ENCODE measurements at regions of chr1 and their contacts with region 1.

Region 1: GRCh38 chr1:178126790-178127189 is 32.9 kb downstream of the RASAL2 start:
- DNase-seq: peak; percentile 96
- ATAC-seq: peak; percentile 96
- H3K4me3 ChIP-seq: no peak overlapping the region
- H3K27ac ChIP-seq: peak overlapping the region; percentile 79
- H3K4me1 ChIP-seq: peaks cover 32% of the 10 kb centered on the region
- H3K27me3 ChIP-seq: no peaks in the 10 kb centered on the region
- CTCF ChIP-seq: no peak

Region 2: GRCh38 chr1:178055779-178056471 is 70.9 kb before region 1 on chr1:
- CTCF ChIA-PET with region 1: no interaction called
- POLR2A ChIA-PET with region 1: interaction called, 12 read pairs
- in situ Hi-C with region 1: no loop called
- intact Hi-C with region 1: no loop called
- DNase-seq: peak; percentile 54
- ATAC-seq: peak; percentile 96
- H3K4me3 ChIP-seq: peak overlapping the region; percentile 21 to 27
- H3K27ac ChIP-seq: peak overlapping the region; percentile 89
- H3K4me1 ChIP-seq: peaks cover 33% of the 10 kb centered on the region
- H3K27me3 ChIP-seq: no peaks in the 10 kb centered on the region
- CTCF ChIP-seq: peak; percentile 33; the same call in 1 of the 2 replicates

Region 3: DNA sequence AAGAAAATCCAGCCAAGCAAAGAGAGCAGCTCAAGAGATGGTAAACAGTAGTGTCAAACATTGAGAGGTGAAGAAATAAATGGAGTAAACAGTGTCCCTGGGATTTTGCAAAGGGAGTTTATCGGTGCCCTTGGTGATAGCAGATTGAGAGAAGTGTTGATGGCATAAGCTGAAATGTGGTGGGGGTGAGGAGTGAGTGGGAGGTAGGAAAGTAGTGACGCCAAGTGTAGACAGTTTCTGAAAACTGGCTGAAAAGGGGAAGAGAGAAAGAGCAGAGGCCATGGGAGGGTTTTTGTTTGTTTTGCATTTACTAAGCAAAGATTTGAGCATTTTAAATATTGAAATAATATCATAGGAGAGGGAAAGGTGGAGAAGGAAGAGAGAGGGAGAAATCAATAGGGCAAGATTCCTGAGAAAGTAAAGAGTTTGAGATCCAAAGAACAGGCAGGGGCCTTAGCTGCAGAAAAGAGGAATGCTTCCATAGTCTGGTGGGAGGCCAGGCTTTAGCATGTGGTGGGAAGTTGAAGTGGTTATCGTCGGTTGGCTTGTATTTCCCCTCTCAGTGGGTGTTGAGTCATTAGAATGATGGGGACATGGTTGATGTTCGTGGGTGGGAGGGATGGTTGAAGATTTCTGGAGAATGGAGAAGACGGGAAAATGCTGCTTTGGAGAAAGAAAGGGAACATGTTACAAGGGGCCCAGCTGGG is 59.7 kb before region 1 on chr1:
- CTCF ChIA-PET with region 1: no interaction called
- POLR2A ChIA-PET with region 1: no interaction called
- in situ Hi-C with region 1: no loop called
- intact Hi-C with region 1: no loop called
- DNase-seq: no peak
- ATAC-seq: no peak
- H3K4me3 ChIP-seq: no peak overlapping the region
- H3K27ac ChIP-seq: no peak overlapping the region
- H3K4me1 ChIP-seq: no peaks in the 10 kb centered on the region
- H3K27me3 ChIP-seq: no peaks in the 10 kb centered on the region
- CTCF ChIP-seq: no peak

Region 4: GRCh38 chr1:178109348-178110143 is 17.2 kb before region 1 on chr1:
- CTCF ChIA-PET with region 1: no interaction called
- POLR2A ChIA-PET with region 1: no interaction called
- in situ Hi-C with region 1: no loop called
- intact Hi-C with region 1: no loop called
- DNase-seq: no peak
- ATAC-seq: no peak
- H3K4me3 ChIP-seq: no peak overlapping the region
- H3K27ac ChIP-seq: no peak overlapping the region
- H3K4me1 ChIP-seq: no peaks in the 10 kb centered on the region
- H3K27me3 ChIP-seq: no peaks in the 10 kb centered on the region
- CTCF ChIP-seq: no peak

Measured in Panc1 (cell line).